Endothelial cell of umbilical vein (primary cell): ENCODE measurements at regions of chr17 and their contacts with region 1.

Region 1: GRCh38 chr17:17972126-17972951 is at the starts of genes DRC3 and TOM1L2:
- DNase-seq: peak; percentile 100
- H3K4me3 ChIP-seq: peak within 1 kb of the TSS; percentile 79 to 87 (median 82)
- H3K27ac ChIP-seq: peak within 1 kb of the TSS; percentile 67
- H3K4me1 ChIP-seq: peaks cover 17% of the 10 kb centered on the region
- H3K27me3 ChIP-seq: no peaks in the 10 kb centered on the region
- CTCF ChIP-seq: no peak
- POLR2A ChIP-seq: peak; percentile 78
- total RNA-seq, gene DRC3: 1.6 and 2.3 TPM in 2 replicates
- total RNA-seq, gene TOM1L2: 37.6 and 41.5 TPM in 2 replicates

Region 2: DNA sequence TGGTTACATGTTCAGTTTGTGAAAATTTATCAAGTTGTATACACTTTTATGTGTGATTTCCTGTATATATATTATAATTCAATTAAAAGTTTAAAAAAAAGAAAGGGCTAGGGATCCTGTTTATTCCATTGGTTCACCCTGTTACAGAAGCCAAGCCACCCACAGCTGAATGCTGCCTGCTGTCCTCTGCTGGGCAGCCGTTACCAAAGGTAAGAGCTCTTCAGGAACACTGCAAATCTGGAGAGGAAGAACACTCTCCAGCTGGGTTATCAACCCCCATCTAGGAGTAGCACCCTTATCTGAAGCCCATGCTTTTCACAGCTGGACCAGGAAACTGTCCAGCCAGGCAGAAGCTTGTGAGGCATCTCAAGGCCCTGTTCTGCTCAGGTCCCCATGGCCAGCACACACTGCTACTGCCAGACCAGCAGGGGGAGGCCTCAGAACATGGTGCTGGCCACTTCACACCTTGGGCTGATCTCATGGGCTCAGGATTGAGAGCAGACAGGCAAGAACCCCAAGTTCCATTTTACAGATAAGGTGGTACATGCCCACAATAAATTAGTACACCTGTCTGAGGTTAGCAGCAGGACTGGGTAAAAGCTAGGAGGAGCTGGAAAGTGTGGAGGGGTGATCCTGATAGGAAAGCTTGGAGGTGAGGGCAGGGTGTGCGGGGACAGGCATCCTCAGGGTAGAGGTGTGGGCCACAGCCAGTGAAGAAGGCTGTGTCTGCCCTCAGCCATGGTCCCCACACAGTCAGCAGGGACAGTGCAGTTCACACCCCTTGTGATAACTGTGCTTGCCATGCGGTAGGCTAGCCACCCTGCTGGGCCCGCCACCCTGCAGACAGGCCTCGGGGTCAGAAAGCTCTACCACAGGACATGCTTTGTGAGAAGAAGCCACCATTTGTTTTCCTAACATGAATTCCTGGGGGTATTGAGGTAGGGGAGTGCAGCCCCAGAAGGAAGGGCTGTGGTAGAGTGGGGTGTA is 81.3 kb before region 1 on chr17:
- CTCF ChIA-PET with region 1: interaction called, 14 read pairs
- POLR2A ChIA-PET with region 1: no interaction called
- dilution Hi-C with region 1: no loop called
- intact Hi-C with region 1: loop called (anchors 1 kb)
- DNase-seq: peak; percentile 66
- H3K4me3 ChIP-seq: no peak overlapping the region
- H3K27ac ChIP-seq: no peak overlapping the region
- H3K4me1 ChIP-seq: no peaks in the 10 kb centered on the region
- H3K27me3 ChIP-seq: no peaks in the 10 kb centered on the region
- CTCF ChIP-seq: peak; percentile 83 to 91
- POLR2A ChIP-seq: no peak

Region 3: GRCh38 chr17:17942846-17943245 is 29.5 kb before region 1 on chr17:
- CTCF ChIA-PET with region 1: interaction called, 5 read pairs
- POLR2A ChIA-PET with region 1: no interaction called
- dilution Hi-C with region 1: no loop called
- intact Hi-C with region 1: loop called (anchors 1 kb)
- DNase-seq: peak; percentile 45
- H3K4me3 ChIP-seq: peak overlapping the region in 1 of 3 experiments; percentile 29
- H3K27ac ChIP-seq: peak overlapping the region; percentile 61
- H3K4me1 ChIP-seq: peaks cover 38% of the 10 kb centered on the region
- H3K27me3 ChIP-seq: no peaks in the 10 kb centered on the region
- CTCF ChIP-seq: no peak
- POLR2A ChIP-seq: no peak

Region 4: DNA sequence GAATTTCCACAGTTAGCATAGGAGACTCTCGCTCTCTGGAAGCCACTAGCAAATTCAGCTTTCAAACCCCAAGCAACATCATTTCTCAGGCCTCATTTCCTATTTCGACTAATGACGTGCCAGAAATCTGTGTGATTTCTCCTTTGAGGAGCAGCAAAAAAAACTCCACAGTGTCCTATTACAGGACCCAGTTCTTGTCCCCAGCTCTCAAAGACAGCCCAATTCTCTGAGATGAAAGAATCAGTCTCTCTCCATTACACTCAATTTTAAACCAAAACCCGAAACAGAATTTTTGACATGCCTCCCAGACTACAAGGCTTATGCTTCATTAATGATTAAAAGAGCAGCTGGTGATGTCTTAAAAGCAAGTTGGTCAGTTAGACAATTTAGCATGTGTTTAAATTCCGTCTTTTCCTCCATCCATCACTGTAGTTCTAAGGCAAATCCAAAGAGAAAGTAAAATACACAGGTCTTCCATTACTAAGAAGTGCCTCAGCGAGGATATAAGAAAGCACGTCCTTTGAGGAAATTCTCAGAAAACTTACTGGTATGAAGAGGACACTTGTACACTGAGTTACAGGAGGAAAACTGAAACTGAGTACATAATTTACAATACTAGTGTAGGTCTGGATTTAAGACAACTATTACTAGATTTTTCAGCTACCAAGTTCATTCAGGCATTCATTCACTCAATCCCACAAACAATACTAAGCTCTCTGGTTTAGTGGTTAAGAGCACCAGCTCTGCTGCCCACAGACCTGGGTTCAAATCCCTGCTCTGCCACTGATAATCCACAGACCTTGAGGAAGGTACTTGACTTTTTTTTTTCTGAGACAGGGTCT is 12.6 kb before region 1 on chr17:
- CTCF ChIA-PET with region 1: interaction called, 8 read pairs
- POLR2A ChIA-PET with region 1: interaction called, 3 read pairs
- dilution Hi-C with region 1: no loop called
- intact Hi-C with region 1: loop called (anchors 1 kb)
- DNase-seq: peak; percentile 55
- H3K4me3 ChIP-seq: peak overlapping the region in 1 of 3 experiments; percentile 14
- H3K27ac ChIP-seq: peak overlapping the region; percentile 80
- H3K4me1 ChIP-seq: peaks cover 28% of the 10 kb centered on the region
- H3K27me3 ChIP-seq: no peaks in the 10 kb centered on the region
- CTCF ChIP-seq: no peak
- POLR2A ChIP-seq: no peak

Region 5: GRCh38 chr17:18038861-18039534 is 66.7 kb after region 1 on chr17 and contains the starts of genes ATPAF2 and GID4:
- CTCF ChIA-PET with region 1: interaction called, 4 read pairs
- POLR2A ChIA-PET with region 1: no interaction called
- dilution Hi-C with region 1: no loop called
- intact Hi-C with region 1: loop called (anchors 2 kb)
- DNase-seq: peak; percentile 99
- H3K4me3 ChIP-seq: peak within 1 kb of the TSS; percentile 90 to 96 (median 91)
- H3K27ac ChIP-seq: peak within 1 kb of the TSS; percentile 58
- H3K4me1 ChIP-seq: peaks cover 20% of the 10 kb centered on the region
- H3K27me3 ChIP-seq: no peaks in the 10 kb centered on the region
- CTCF ChIP-seq: peak in 1 of 2 donors; percentile 3
- POLR2A ChIP-seq: peak; percentile 60
- total RNA-seq, gene ATPAF2: 32.1 and 35.7 TPM in 2 replicates
- total RNA-seq, gene GID4: 10.1 and 11.3 TPM in 2 replicates

Region 6: GRCh38 chr17:18260332-18261144 is 288.2 kb after region 1 on chr17 and contains the start of gene MIEF2:
- CTCF ChIA-PET with region 1: no interaction called
- POLR2A ChIA-PET with region 1: no interaction called
- dilution Hi-C with region 1: no loop called
- intact Hi-C with region 1: no loop called
- DNase-seq: peak; percentile 96
- H3K4me3 ChIP-seq: peak within 1 kb of the TSS; percentile 45 to 78 (median 65)
- H3K27ac ChIP-seq: peak within 1 kb of the TSS; percentile 23
- H3K4me1 ChIP-seq: peaks cover 14% of the 10 kb centered on the region
- H3K27me3 ChIP-seq: no peaks in the 10 kb centered on the region
- CTCF ChIP-seq: no peak
- POLR2A ChIP-seq: peak; percentile 52
- total RNA-seq, gene MIEF2: 8.3 and 8.5 TPM in 2 replicates